Ovary (tissue), 10 donors: ENCODE measurements at regions of chr11 and their contacts with region 1.

Region 1: GRCh38 chr11:45964911-45965389 is 42.5 kb downstream of the LARGE2 start:
- DNase-seq: peak; percentile 59 to 74 (median 65)
- H3K4me3 ChIP-seq: no peak overlapping the region
- H3K27ac ChIP-seq: peak overlapping the region in 1 of 2 donors; percentile 0
- H3K4me1 ChIP-seq: no peaks in the 10 kb centered on the region
- H3K27me3 ChIP-seq: no peaks in the 10 kb centered on the region
- CTCF ChIP-seq: peak; percentile 78 to 85 (median 79)
- EP300 ChIP-seq: no peak
- POLR2A ChIP-seq: no peak

Region 2: DNA sequence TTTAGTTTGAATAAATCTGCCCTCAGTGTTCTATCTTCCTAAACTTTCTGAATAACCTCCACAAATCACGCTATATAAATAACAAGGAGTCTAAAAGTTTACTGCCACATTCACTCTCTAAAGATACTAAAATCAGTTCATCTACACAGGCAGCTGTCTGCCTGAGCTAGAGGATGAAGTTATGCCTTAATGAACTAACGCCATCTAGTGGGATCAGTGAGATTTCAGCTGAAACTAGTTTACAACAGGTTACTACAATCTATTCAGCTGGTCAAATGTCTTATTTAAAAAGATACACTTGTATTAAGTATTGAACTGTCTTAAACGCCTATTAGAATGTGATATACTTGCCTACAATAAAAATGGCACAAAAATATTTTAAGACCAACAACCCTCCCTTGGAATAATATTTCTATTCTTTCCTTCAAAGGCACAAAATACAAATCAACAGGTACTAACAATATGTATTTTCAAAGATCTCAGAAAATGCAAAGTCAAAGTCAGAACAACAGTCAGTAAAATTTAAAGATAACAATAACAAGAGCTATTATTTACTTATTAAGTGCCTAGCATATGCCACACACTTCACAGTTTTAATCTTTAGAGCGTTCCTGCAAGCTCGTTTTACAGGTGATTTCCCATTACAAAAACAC is 41.6 kb after region 1 on chr11:
- intact Hi-C with region 1: loop called in 3 of 4 experiments (anchors 5 kb)
- DNase-seq: no peak
- H3K4me3 ChIP-seq: no peak overlapping the region
- H3K27ac ChIP-seq: no peak overlapping the region
- H3K4me1 ChIP-seq: peaks cover 2% of the 10 kb centered on the region
- H3K27me3 ChIP-seq: no peaks in the 10 kb centered on the region
- CTCF ChIP-seq: peak; percentile 21 to 69 (median 56)
- EP300 ChIP-seq: no peak
- POLR2A ChIP-seq: no peak

Region 3: DNA sequence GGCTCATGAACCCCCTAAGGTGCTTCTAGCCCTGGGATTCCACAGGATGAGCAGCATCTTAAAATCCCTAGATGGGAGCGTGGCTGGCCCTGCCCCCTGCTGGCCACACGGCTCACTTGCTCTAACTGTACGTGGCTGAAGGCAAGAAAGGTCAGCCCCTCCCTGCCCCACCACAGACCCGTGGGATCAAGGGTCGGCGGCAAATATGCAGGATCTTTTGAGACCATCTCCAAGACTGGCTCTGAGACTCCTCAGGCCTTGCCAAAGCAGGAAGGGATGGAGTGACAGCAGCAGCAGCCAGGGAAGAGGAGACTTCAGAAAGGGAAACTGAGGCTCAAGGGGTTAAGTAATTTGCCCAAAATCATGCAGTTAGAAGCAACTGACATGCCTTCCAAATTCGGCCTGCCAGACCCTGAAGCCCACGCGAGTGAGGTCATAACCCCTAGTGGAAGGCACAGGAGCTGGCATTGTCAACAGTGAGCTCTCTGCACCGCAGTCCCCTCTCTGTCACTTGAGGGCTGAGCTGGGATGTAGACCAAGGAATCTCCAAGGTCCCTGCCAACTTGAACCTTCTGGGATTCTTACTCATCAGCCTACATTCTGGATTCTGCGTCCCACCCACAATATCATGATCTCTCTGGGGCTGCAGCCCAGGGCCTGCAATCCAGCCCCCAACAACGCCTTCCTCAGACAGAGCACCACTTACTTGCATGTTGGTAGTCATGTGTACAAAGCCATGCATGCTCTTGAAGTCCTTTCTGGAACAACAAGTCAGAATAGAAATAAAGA is 343.9 kb after region 1 on chr11:
- intact Hi-C with region 1: loop called in 1 of 4 experiments (anchors 10 kb)
- DNase-seq: peak; percentile 68 to 89 (median 84)
- H3K4me3 ChIP-seq: no peak overlapping the region
- H3K27ac ChIP-seq: no peak overlapping the region
- H3K4me1 ChIP-seq: no peaks in the 10 kb centered on the region
- H3K27me3 ChIP-seq: no peaks in the 10 kb centered on the region
- CTCF ChIP-seq: peak; percentile 86 to 93 (median 92)
- EP300 ChIP-seq: no peak
- POLR2A ChIP-seq: no peak